ENCODE measurements at regions of chr18 and their contacts with region 1.

Region 1: DNA sequence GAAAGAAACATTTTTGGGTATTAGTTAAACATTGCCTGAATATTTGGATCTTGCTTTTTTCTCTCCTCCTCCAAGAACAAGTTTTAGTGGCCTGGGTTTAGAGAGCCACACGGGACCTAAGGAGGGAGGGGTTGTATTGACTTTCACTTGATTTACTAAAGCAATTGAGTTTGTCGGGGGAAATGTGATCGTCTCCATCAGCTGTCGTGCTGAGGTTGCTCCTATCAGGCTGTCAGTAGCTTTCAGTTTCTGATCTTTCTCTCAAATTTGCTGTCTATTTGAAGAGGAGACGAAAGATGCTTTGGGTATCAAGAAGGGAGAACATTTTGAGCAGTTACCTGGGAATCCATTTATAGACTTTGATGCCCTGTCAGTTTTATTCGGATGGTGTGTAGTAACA is 106.0 kb downstream of the SETBP1 start:
- DNase-seq: no peak
- ATAC-seq: peak; percentile 75
- H3K4me3 Mint-ChIP-seq: peak overlapping the region; percentile 85
- H3K27ac Mint-ChIP-seq: peak overlapping the region; percentile 92
- H3K4me1 Mint-ChIP-seq: peaks cover 80% of the 10 kb centered on the region
- H3K27me3 Mint-ChIP-seq: no peaks in the 10 kb centered on the region
- CTCF ChIP-seq: no peak

Region 2: GRCh38 chr18:43139288-43139946 is 1647.3 kb before region 1 on chr18:
- CTCF ChIA-PET with region 1: no interaction called
- POLR2A ChIA-PET with region 1: no interaction called
- intact Hi-C with region 1: no loop called
- DNase-seq: no peak
- ATAC-seq: no peak
- H3K4me3 Mint-ChIP-seq: no peak overlapping the region
- H3K27ac Mint-ChIP-seq: no peak overlapping the region
- H3K4me1 Mint-ChIP-seq: no peaks in the 10 kb centered on the region
- H3K27me3 Mint-ChIP-seq: no peaks in the 10 kb centered on the region
- CTCF ChIP-seq: no peak

Region 3: DNA sequence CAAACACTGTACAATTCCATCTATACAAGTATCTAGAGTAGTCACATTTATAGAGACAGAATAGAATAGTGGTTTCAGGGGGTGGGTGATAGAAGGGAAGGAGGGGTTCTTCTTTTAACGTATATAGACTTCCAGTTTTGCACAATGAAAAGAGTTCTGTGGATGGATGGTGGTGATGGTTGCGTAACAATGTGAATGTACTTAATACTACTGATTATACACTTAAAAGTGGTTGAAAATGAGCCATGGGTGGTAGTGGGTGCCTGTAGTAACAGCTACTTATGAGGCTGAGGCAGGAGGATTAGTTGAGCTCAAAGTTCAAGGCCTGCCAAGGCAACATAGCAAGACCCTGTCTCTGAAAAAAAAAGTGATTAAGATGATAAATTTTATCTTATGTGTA is 20.2 kb before region 1 on chr18:
- CTCF ChIA-PET with region 1: no interaction called
- POLR2A ChIA-PET with region 1: interaction called, 6 read pairs
- intact Hi-C with region 1: loop called (anchors 2 kb)
- DNase-seq: no peak
- ATAC-seq: no peak
- H3K4me3 Mint-ChIP-seq: no peak overlapping the region
- H3K27ac Mint-ChIP-seq: peak overlapping the region; percentile 91
- H3K4me1 Mint-ChIP-seq: peaks cover 98% of the 10 kb centered on the region
- H3K27me3 Mint-ChIP-seq: no peaks in the 10 kb centered on the region
- CTCF ChIP-seq: no peak

Region 4: DNA sequence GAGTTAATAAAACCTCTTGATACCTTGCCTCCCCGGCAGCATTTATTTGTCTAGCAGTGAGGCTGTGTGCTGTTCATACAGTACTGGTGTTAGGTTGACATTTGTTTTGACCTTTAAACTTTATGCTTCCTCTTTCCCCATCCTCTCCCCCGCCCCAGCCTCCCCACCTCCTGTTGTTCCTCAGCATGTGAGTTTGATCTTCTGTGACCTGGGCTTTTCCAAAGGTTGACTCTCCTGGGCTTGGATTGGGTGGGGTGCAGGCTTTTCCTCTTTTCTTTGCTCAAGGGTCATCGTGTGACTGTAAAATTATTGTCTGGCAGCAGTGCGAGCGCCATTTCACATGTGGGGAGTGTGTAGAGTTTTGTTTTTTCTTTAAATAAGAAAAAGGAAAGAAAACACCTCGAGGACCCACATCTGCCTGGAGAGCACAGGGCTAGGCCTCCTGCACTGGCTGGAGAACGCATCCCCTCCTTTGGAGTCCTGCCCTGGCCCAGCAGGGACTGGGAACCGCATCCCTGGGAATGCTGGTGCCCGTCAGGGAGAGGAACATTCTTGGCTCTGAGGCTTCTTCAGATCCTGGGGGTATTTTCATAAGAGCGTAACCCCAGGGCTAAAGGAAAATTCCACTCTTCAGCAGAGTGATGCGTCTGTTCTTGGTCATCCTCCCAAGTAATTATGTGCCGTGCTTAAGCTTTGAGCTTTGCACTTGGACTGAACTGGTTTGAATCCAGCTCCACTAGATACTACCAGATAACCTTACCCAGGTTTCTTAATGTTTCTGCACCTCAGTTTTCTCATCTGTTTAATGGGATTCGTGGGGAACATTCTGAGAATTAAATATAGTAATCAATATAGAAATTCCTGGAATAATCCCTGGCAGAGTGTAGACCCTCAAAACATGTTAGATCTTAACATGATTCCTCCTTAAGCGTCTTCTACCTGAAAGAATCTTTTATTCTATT is 14.5 kb before region 1 on chr18:
- CTCF ChIA-PET with region 1: interaction called, 4 read pairs
- POLR2A ChIA-PET with region 1: interaction called, 6 read pairs
- intact Hi-C with region 1: loop called (anchors 1 kb)
- DNase-seq: no peak
- ATAC-seq: peak; percentile 78
- H3K4me3 Mint-ChIP-seq: peak overlapping the region; percentile 33
- H3K27ac Mint-ChIP-seq: peak overlapping the region; percentile 73
- H3K4me1 Mint-ChIP-seq: peaks cover 86% of the 10 kb centered on the region
- H3K27me3 Mint-ChIP-seq: no peaks in the 10 kb centered on the region
- CTCF ChIP-seq: no peak

Region 5: GRCh38 chr18:44799907-44800421 is 13.3 kb after region 1 on chr18:
- CTCF ChIA-PET with region 1: interaction called, 5 read pairs
- POLR2A ChIA-PET with region 1: interaction called, 6 read pairs
- intact Hi-C with region 1: loop called (anchors 2 kb)
- DNase-seq: no peak
- ATAC-seq: peak; percentile 43
- H3K4me3 Mint-ChIP-seq: peak overlapping the region; percentile 61
- H3K27ac Mint-ChIP-seq: peak overlapping the region; percentile 86
- H3K4me1 Mint-ChIP-seq: peaks cover 94% of the 10 kb centered on the region
- H3K27me3 Mint-ChIP-seq: no peaks in the 10 kb centered on the region
- CTCF ChIP-seq: no peak

Region 6: DNA sequence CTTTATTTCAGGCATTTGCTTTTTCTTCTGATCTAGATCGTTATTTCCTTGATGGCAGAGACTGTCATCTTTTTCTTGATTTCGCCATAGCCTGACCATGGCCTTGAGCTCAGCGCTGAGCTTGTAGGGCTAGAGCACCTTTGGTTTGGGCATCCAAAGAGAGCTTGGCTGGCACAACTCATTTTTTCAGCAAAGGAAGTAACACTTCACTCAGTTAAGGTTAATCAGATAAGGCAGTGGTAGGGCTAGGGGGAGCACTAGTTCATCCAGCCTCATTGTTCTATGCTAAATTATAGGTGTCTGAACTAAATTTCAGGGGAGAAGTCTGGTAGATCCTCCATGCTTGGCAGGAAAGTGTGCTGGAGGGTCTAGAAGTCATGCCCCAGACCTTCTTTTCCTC is 19.0 kb after region 1 on chr18:
- CTCF ChIA-PET with region 1: no interaction called
- POLR2A ChIA-PET with region 1: interaction called, 12 read pairs
- intact Hi-C with region 1: loop called (anchors 2 kb)
- DNase-seq: no peak
- ATAC-seq: no peak
- H3K4me3 Mint-ChIP-seq: no peak overlapping the region
- H3K27ac Mint-ChIP-seq: peak overlapping the region; percentile 4
- H3K4me1 Mint-ChIP-seq: peaks cover 82% of the 10 kb centered on the region
- H3K27me3 Mint-ChIP-seq: no peaks in the 10 kb centered on the region
- CTCF ChIP-seq: no peak

Measured in activated B cell treated with CpG ODN at 0.5 μM for 24 hours (primary cell).